T-cell (primary cell): ENCODE measurements at regions of chr9 and their contacts with region 1.

Region 1: GRCh38 chr9:79559495-79560181 is 12.1 kb upstream of the TLE4 start:
- DNase-seq: no peak
- ATAC-seq: no peak
- H3K4me3 ChIP-seq: no peak overlapping the region
- H3K4me3 Mint-ChIP-seq: no peak overlapping the region
- H3K27ac ChIP-seq: no peak overlapping the region
- H3K27ac Mint-ChIP-seq: no peak overlapping the region
- H3K4me1 ChIP-seq: no peaks in the 10 kb centered on the region
- H3K4me1 Mint-ChIP-seq: peaks cover 0 to 2% (median 2%) of the 10 kb centered on the region in 3 donors
- H3K27me3 ChIP-seq: peaks cover 0 to under 1% of the 10 kb centered on the region in 2 experiments
- H3K27me3 Mint-ChIP-seq: peaks cover 0 to 14% of the 10 kb centered on the region in 2 donors

Region 2: GRCh38 chr9:78369639-78370219 is 1189.9 kb before region 1 on chr9:
- CTCF ChIA-PET with region 1: interaction called in 1 of 2 experiments, 12 read pairs
- POLR2A ChIA-PET with region 1: no interaction called
- DNase-seq: peak in 29 of 35 experiments; percentile 4 to 68 (median 31)
- ATAC-seq: no peak
- H3K4me3 ChIP-seq: no peak overlapping the region
- H3K4me3 Mint-ChIP-seq: no peak overlapping the region
- H3K27ac ChIP-seq: no peak overlapping the region
- H3K27ac Mint-ChIP-seq: no peak overlapping the region
- H3K4me1 ChIP-seq: no peaks in the 10 kb centered on the region
- H3K4me1 Mint-ChIP-seq: no peaks in the 10 kb centered on the region
- H3K27me3 ChIP-seq: peaks cover 0 to 20% of the 10 kb centered on the region in 2 experiments
- H3K27me3 Mint-ChIP-seq: peaks cover 24 to 37% of the 10 kb centered on the region in 2 donors